Endothelial cell of umbilical vein (primary cell): ENCODE measurements at regions of chr17 and their contacts with region 1.

Region 1: GRCh38 chr17:82767041-82767754 is 15.3 kb downstream of the TBCD start:
- DNase-seq: peak; percentile 50
- H3K4me3 ChIP-seq: no peak overlapping the region
- H3K27ac ChIP-seq: no peak overlapping the region
- H3K4me1 ChIP-seq: no peaks in the 10 kb centered on the region
- H3K27me3 ChIP-seq: no peaks in the 10 kb centered on the region
- CTCF ChIP-seq: peak; percentile 59 to 62
- POLR2A ChIP-seq: no peak

Region 2: GRCh38 chr17:82320956-82321927 is 446.0 kb before region 1 on chr17:
- CTCF ChIA-PET with region 1: no interaction called
- POLR2A ChIA-PET with region 1: no interaction called
- dilution Hi-C with region 1: no loop called
- intact Hi-C with region 1: no loop called
- DNase-seq: no peak
- H3K4me3 ChIP-seq: no peak overlapping the region
- H3K27ac ChIP-seq: no peak overlapping the region
- H3K4me1 ChIP-seq: no peaks in the 10 kb centered on the region
- H3K27me3 ChIP-seq: no peaks in the 10 kb centered on the region
- CTCF ChIP-seq: peak; percentile 71 to 74
- POLR2A ChIP-seq: no peak

Region 3: DNA sequence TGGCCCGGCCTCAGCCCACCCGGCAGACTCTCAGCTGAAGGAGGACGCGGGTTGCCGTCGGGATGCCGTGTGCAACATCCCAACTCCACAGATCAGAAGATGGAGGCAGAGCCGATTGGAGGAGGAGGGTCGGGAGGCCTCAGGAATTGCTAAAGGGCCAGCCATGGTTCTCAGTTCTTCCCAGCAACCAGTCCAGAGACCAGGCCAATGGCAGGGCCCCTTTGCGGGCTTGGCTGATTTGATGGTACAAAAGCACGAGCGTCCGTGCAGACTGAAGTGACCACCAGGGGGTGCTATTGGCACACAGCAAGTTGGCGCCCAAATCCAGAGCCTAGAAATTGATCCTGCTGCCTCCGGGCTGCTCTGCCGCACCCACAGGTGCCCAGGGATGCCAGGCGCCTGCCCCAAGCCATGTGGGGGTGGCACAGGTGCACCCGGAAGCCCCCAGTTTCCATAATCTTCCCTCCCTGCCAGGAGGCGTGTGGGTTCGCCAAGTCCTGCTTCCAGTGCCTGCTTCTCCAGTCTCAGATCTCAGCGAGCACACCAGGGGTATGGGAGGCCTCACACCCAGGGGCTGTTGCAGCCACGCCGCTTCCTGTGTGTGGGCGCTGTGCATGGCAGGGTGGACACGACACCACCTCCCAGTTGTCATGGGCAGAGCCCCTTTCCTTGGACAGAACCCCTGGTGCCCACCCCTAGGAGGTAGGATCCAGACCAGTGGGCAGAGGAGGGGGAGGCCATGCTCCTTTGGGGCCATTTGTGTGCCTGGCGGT is 415.3 kb before region 1 on chr17:
- CTCF ChIA-PET with region 1: interaction called, 4 read pairs
- POLR2A ChIA-PET with region 1: no interaction called
- dilution Hi-C with region 1: no loop called
- intact Hi-C with region 1: loop called (anchors 1 kb)
- DNase-seq: peak; percentile 85
- H3K4me3 ChIP-seq: no peak overlapping the region
- H3K27ac ChIP-seq: no peak overlapping the region
- H3K4me1 ChIP-seq: no peaks in the 10 kb centered on the region
- H3K27me3 ChIP-seq: no peaks in the 10 kb centered on the region
- CTCF ChIP-seq: peak; percentile 93 to 96
- POLR2A ChIP-seq: no peak

Region 4: GRCh38 chr17:82668631-82669099 is 98.5 kb before region 1 on chr17:
- CTCF ChIA-PET with region 1: interaction called, 14 read pairs
- POLR2A ChIA-PET with region 1: no interaction called
- dilution Hi-C with region 1: no loop called
- intact Hi-C with region 1: loop called (anchors 1 kb)
- DNase-seq: no peak
- H3K4me3 ChIP-seq: no peak overlapping the region
- H3K27ac ChIP-seq: no peak overlapping the region
- H3K4me1 ChIP-seq: no peaks in the 10 kb centered on the region
- H3K27me3 ChIP-seq: no peaks in the 10 kb centered on the region
- CTCF ChIP-seq: peak; percentile 32 to 58
- POLR2A ChIP-seq: no peak